SK-N-SH (cell line): ENCODE measurements at regions of chr1 and their contacts with region 1.

Region 1: DNA sequence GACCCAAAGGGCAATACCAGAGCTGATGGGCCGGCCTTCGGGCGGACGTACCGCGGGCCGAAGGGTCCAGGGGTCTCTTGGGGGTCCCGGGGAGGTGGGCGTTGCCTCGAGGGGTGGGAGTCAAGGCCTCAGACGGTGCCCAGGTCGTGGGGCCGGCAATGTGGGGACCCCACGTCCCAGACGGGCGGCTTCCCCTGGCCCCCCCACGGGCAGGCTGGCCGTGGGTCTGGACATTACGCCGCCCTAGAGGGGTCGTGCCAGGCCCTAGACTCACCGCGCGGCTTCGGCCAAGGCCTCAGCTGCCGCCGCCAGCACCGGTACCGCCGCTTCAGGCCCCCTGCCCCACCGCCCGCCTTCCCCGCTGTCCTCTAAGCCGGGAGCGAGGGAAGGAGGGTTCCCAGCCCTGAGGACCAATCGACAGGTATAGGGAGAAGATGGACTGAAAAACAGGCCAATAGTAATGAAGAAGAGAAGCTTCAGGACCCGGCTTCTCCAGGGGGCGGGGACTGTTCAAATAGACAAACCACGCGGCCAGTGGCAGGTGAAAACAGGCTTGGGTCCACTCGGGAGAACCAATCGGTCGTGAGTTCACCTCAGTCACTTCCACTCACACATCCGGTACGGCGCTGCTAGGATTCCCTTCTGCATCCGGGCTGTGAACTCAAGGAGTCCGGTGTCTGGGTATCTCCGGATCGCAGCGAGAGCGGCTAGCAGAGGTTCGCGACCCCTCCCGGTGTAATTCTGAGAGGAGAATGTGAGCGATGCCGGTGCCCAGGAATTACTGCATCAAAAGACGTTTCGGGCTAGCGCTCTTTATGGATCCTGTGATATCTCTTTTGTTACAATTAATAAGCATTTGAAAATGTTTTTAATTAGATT is at the start of gene MTOR:
- DNase-seq: peak; percentile 98
- H3K4me3 ChIP-seq: peak within 1 kb of the TSS; percentile 81 to 83
- H3K27ac ChIP-seq: peak within 1 kb of the TSS; percentile 65 to 85
- H3K4me1 ChIP-seq: peaks cover 0 to 2% of the 10 kb centered on the region in 2 experiments; a peak in 2 of 4 replicates
- H3K27me3 ChIP-seq: no peaks in the 10 kb centered on the region
- CTCF ChIP-seq: peak; percentile 42
- EP300 ChIP-seq: no peak; a peak in 1 of 4 replicates
- RAD21 ChIP-seq: no peak
- polyA plus RNA-seq, gene MTOR: 20.9 and 26.4 TPM in 2 replicates

Region 2: DNA sequence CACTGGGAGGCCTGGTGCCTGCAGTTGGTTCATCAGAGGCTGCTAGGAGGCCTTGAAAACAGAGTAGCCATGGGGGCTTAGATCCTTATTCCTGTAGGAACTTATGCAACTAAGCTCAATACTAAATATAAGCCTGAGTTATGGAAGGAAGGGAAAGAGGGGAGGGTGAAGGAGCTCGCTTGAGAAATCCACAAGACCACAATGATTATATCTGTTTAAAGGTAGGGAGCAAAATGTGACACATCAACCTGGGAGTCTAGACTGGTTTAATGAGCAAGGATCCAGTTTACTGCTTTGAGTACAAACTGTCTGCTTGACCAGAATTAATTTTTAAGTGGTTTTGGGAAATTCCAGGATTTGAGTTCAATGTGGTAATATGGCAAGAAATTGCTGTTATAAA is 93.7 kb before region 1 on chr1:
- CTCF ChIA-PET with region 1: no interaction called
- POLR2A ChIA-PET with region 1: no interaction called
- DNase-seq: no peak
- H3K4me3 ChIP-seq: no peak overlapping the region
- H3K27ac ChIP-seq: no peak overlapping the region
- H3K4me1 ChIP-seq: no peaks in the 10 kb centered on the region
- H3K27me3 ChIP-seq: no peaks in the 10 kb centered on the region
- CTCF ChIP-seq: no peak
- EP300 ChIP-seq: no peak
- RAD21 ChIP-seq: no peak

Region 3: GRCh38 chr1:11204396-11205190 is 57.8 kb before region 1 on chr1:
- CTCF ChIA-PET with region 1: no interaction called
- POLR2A ChIA-PET with region 1: no interaction called
- DNase-seq: no peak
- H3K4me3 ChIP-seq: no peak overlapping the region
- H3K27ac ChIP-seq: no peak overlapping the region
- H3K4me1 ChIP-seq: no peaks in the 10 kb centered on the region; a peak in 1 of 4 replicates
- H3K27me3 ChIP-seq: no peaks in the 10 kb centered on the region
- CTCF ChIP-seq: no peak
- EP300 ChIP-seq: no peak
- RAD21 ChIP-seq: no peak

Region 4: GRCh38 chr1:11248155-11248554 is 14.3 kb before region 1 on chr1:
- CTCF ChIA-PET with region 1: interaction called, 33 read pairs
- POLR2A ChIA-PET with region 1: interaction called, 3 read pairs
- DNase-seq: no peak
- H3K4me3 ChIP-seq: no peak overlapping the region
- H3K27ac ChIP-seq: no peak overlapping the region
- H3K4me1 ChIP-seq: no peaks in the 10 kb centered on the region
- H3K27me3 ChIP-seq: no peaks in the 10 kb centered on the region
- CTCF ChIP-seq: no peak
- EP300 ChIP-seq: no peak
- RAD21 ChIP-seq: 0 out of 2 replicates have a peak, but pooled peaks have one; percentile 7

Region 5: GRCh38 chr1:11272832-11273594 is 10.6 kb after region 1 on chr1 and contains the start of gene UBIAD1:
- CTCF ChIA-PET with region 1: interaction called, 13 read pairs
- POLR2A ChIA-PET with region 1: interaction called, 15 read pairs
- DNase-seq: peak; percentile 98
- H3K4me3 ChIP-seq: peak within 1 kb of the TSS; percentile 73 to 85
- H3K27ac ChIP-seq: peak within 1 kb of the TSS; percentile 79 to 85
- H3K4me1 ChIP-seq: peaks cover 9 to 11% of the 10 kb centered on the region in 2 experiments; a peak in 3 of 4 replicates
- H3K27me3 ChIP-seq: no peaks in the 10 kb centered on the region
- CTCF ChIP-seq: no peak
- EP300 ChIP-seq: no peak
- RAD21 ChIP-seq: peak; percentile 46
- polyA plus RNA-seq, gene UBIAD1: 13.7 and 15.7 TPM in 2 replicates